PC-3 (cell line): ENCODE measurements at regions of chr12 and their contacts with region 1.

Region 1: GRCh38 chr12:30134229-30134628 is 350.5 kb upstream of the TMTC1 start:
- DNase-seq: peak; percentile 64
- ATAC-seq: peak; percentile 45; the same call in 1 of the 2 replicates
- H3K4me3 ChIP-seq: no peak overlapping the region
- H3K27ac ChIP-seq: no peak overlapping the region
- H3K4me1 ChIP-seq: peaks cover 6% of the 10 kb centered on the region
- H3K27me3 ChIP-seq: no peaks in the 10 kb centered on the region
- CTCF ChIP-seq: peak; percentile 58; the same call in 1 of the 2 replicates

Region 2: GRCh38 chr12:29365091-29365490 is 769.1 kb before region 1 on chr12:
- CTCF ChIA-PET with region 1: no interaction called
- POLR2A ChIA-PET with region 1: interaction called, 13 read pairs
- intact Hi-C with region 1: no loop called
- DNase-seq: no peak
- ATAC-seq: no peak
- H3K4me3 ChIP-seq: no peak overlapping the region
- H3K27ac ChIP-seq: no peak overlapping the region
- H3K4me1 ChIP-seq: no peaks in the 10 kb centered on the region
- H3K27me3 ChIP-seq: no peaks in the 10 kb centered on the region
- CTCF ChIP-seq: no peak

Region 3: DNA sequence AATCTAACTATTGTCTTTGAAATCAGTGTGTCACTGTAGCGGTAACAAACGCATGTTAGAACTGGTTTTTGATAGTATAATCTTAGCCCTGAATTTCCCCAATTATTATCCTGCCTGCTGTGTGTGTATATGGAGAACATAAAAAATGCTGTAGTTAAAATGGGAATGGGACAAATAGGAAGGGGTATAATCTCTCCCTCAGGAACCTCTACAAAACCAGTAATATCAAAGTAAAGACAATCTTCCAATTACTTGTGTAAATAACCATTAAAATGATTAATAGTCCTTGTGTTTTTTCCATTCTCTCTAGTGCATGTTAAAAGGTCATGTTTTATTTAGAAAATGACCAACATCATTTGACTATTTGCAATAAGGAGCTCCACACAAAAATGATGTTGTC is 150.4 kb before region 1 on chr12:
- CTCF ChIA-PET with region 1: no interaction called
- POLR2A ChIA-PET with region 1: no interaction called
- intact Hi-C with region 1: loop called (anchors 5 kb)
- DNase-seq: no peak
- ATAC-seq: no peak
- H3K4me3 ChIP-seq: no peak overlapping the region
- H3K27ac ChIP-seq: no peak overlapping the region
- H3K4me1 ChIP-seq: peaks cover 18% of the 10 kb centered on the region
- H3K27me3 ChIP-seq: no peaks in the 10 kb centered on the region
- CTCF ChIP-seq: no peak

Region 4: DNA sequence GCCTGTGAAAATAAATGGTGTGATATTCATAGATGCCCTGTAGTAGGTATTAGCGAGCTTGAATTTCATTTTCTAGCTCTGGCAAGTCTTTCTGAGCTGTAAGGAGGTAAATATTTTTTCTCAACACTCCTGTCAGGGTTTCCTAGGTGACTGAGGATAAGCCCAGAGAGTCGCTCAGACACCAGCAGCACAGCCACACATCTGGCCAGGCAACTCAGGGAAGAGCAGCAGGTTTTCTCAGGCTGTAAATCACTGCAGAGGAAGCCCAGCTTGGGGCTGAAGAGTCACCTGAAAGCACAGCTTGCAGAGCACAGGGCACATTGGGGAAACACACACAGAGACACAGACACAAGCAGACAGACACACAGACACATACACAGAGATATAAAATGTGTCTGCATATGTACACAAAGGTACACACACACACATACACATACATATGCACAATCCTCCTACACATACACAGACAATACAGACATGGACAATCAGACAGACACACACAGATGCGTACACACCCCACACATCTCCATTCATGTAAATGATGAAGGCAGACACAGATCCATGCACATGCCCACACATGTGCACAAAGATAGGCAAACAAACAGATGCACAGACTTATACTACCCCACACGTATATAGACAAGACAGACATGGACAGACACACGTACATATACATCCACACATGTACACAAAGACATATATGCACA is 118.4 kb before region 1 on chr12:
- CTCF ChIA-PET with region 1: interaction called, 12 read pairs
- POLR2A ChIA-PET with region 1: no interaction called
- intact Hi-C with region 1: no loop called
- DNase-seq: no peak
- ATAC-seq: no peak
- H3K4me3 ChIP-seq: no peak overlapping the region
- H3K27ac ChIP-seq: no peak overlapping the region
- H3K4me1 ChIP-seq: peaks cover 1% of the 10 kb centered on the region; the same call in 1 of the 2 replicates
- H3K27me3 ChIP-seq: no peaks in the 10 kb centered on the region
- CTCF ChIP-seq: no peak

Region 5: GRCh38 chr12:30144777-30145683 is 10.8 kb after region 1 on chr12:
- CTCF ChIA-PET with region 1: interaction called, 13 read pairs
- POLR2A ChIA-PET with region 1: interaction called, 3 read pairs
- intact Hi-C with region 1: no loop called
- DNase-seq: no peak
- ATAC-seq: no peak
- H3K4me3 ChIP-seq: no peak overlapping the region
- H3K27ac ChIP-seq: no peak overlapping the region
- H3K4me1 ChIP-seq: no peaks in the 10 kb centered on the region
- H3K27me3 ChIP-seq: no peaks in the 10 kb centered on the region
- CTCF ChIP-seq: no peak

Region 6: DNA sequence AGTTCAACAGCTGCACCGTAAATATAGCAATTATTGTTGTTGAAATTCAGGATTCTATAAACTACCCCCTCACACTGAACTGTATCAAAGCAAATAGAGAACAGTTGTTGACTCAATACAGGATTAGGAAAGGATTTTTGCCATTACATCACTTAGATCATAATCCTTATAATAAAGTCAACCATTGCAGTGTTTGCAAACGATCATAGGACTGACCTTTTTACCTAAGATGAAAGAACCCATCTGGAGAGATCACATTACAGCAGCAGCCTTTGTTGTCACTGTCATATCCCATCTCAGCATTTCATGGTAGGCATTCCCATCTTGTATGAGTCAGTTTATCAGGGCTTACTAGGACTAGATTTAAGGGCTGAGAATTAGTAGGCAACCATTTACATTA is 465.4 kb after region 1 on chr12:
- CTCF ChIA-PET with region 1: interaction called, 11 read pairs
- POLR2A ChIA-PET with region 1: no interaction called
- intact Hi-C with region 1: no loop called
- DNase-seq: peak; percentile 22
- ATAC-seq: no peak
- H3K4me3 ChIP-seq: no peak overlapping the region
- H3K27ac ChIP-seq: no peak overlapping the region
- H3K4me1 ChIP-seq: peaks cover 9% of the 10 kb centered on the region
- H3K27me3 ChIP-seq: no peaks in the 10 kb centered on the region
- CTCF ChIP-seq: no peak